CD4-positive, alpha-beta T cell (primary cell): ENCODE measurements at regions of chr16 and their contacts with region 1.

Region 1: DNA sequence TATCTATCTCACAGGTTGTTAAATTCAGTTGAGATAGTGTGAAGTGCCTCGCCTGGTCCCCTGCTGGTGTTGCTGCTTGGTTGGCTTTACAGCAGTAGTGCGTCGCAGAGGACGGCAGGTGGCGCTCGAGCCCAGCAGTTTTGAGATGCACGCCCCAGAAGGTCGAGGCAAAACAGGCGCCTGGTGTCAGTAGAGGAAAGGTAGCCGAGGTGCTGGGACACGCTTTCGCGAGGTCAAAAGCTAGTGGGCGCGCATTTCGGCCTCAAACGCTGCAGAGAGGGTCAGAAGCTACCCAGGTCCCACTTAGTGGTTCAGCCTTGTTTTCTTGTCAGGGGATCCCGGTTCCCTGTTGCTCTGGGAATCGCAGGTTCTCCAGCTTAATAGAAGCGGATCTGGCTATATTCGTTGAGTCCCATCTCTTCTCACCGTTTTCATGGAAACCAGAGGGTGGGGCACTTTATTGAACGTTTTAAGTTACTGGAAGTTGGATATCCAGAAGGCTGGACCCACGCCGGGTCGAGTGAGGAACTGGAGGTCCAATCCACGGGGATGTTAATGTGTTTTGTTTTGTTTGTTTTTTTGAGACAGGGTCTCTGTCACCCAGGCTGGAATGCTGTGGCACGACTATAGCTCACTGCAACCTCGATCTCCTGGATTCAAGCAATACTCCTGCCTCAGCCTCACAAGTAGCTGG is 10.3 kb upstream of the ZFP90 start:
- DNase-seq: peak; percentile 83 to 96 (median 89)
- ATAC-seq: peak; percentile 83
- H3K4me3 ChIP-seq: no peak overlapping the region
- H3K4me3 Mint-ChIP-seq: peak overlapping the region; percentile 88
- H3K27ac ChIP-seq: no peak overlapping the region
- H3K27ac Mint-ChIP-seq: peak overlapping the region; percentile 71
- H3K4me1 ChIP-seq: peaks cover 25% of the 10 kb centered on the region
- H3K4me1 Mint-ChIP-seq: peaks cover 28% of the 10 kb centered on the region
- H3K27me3 ChIP-seq: no peaks in the 10 kb centered on the region
- H3K27me3 Mint-ChIP-seq: no peaks in the 10 kb centered on the region
- CTCF ChIP-seq: peak; percentile 96

Region 2: DNA sequence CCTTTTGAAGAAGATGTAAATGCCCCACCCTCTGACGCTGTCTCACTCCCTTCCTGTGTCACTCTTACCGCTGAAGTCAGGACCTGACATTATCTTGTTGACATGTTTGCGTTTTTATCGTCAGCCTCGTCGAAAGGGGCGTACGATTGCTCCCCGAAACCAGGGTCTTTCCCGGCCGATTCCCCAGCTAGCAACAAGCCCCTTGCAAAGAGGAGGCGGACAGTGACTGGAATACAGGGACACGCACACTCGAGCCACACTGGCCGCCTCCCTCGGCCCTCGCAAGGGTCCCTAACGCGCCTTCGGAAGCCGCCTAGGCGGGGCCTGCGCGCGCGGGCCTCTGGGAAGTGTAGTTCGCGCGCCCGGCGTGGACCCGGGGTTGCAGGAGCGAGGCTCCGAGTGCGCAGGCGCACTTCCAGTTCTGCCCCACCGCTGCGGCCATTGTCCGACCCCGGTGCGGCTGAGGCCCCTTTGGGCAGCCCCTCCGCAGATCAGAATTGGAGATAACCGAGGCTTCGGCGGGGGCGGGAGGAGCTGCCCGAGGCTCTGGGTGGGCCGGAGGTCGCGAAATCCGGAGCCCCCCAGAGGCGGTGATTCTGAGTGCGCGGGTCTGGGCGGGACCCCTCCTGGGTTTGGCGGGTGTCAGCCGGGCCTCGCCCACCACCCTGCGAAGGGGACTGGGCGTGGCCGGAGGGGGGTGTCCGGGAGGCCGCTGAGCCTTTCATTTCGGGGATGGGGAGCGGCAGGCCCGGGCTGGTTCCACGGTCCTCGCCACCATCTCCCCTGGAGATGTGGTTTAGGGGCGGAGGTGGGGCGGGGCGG is 10.3 kb after region 1 on chr16 and contains the start of gene ZFP90:
- CTCF ChIA-PET with region 1: interaction called, 15 read pairs
- POLR2A ChIA-PET with region 1: interaction called, 28 read pairs
- intact Hi-C with region 1: loop called in 1 of 2 experiments (anchors 1 kb)
- DNase-seq: peak; percentile 69 to 93 (median 80)
- ATAC-seq: peak; percentile 86
- H3K4me3 ChIP-seq: peak within 1 kb of the TSS; percentile 79
- H3K4me3 Mint-ChIP-seq: peak within 1 kb of the TSS; percentile 97
- H3K27ac ChIP-seq: peak within 1 kb of the TSS; percentile 80 to 94
- H3K27ac Mint-ChIP-seq: peak within 1 kb of the TSS; percentile 100
- H3K4me1 ChIP-seq: peaks cover 21% of the 10 kb centered on the region
- H3K4me1 Mint-ChIP-seq: peaks cover 30% of the 10 kb centered on the region
- H3K27me3 ChIP-seq: no peaks in the 10 kb centered on the region
- H3K27me3 Mint-ChIP-seq: no peaks in the 10 kb centered on the region
- CTCF ChIP-seq: no peak
- total RNA-seq, gene ZFP90: 23.3 to 24.3 TPM

Region 3: DNA sequence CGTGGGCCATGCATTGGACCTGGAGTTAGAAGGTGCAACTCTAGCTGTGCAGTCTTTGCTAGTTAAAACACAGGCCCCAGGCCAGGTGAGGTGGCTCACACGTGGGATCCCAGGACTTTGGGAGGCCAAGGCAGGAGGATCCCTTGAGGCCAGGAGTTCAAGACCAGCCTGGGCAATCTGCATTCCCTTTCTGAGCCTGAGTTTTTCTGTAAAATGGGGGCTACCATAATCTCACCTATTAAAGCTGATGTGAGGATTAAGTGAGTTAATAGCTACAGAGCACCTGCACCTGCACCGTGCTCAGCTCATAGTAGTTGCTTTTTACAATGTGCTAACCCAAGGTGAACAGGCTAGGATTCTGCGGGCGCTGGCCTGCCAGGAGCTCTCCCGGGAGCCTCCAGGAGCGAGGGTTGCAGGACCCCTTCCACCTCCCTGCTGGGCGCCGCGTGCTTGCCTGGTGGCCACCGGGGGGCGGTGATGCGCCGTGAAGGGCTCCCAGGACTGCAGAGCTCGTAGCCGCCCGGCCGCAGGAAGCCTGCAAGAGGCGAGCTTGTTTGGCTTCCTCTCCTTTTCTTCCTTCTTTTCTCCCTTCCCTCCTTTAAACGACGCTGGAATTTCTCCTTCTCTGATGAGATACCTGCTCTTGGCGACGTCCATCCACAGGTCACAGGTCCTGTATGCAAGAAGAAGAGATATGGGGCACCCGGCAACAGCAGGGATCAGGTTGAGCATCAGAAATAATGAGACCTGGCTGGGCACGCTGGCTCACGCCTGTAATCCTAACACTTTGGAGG is 61.6 kb after region 1 on chr16:
- CTCF ChIA-PET with region 1: interaction called, 38 read pairs
- POLR2A ChIA-PET with region 1: interaction called, 3 read pairs
- intact Hi-C with region 1: loop called (anchors 2 kb)
- DNase-seq: peak; percentile 8 to 69 (median 42)
- ATAC-seq: peak; percentile 81
- H3K4me3 ChIP-seq: no peak overlapping the region
- H3K4me3 Mint-ChIP-seq: no peak overlapping the region
- H3K27ac ChIP-seq: no peak overlapping the region
- H3K27ac Mint-ChIP-seq: no peak overlapping the region
- H3K4me1 ChIP-seq: peaks cover 5% of the 10 kb centered on the region
- H3K4me1 Mint-ChIP-seq: peaks cover 4% of the 10 kb centered on the region
- H3K27me3 ChIP-seq: no peaks in the 10 kb centered on the region
- H3K27me3 Mint-ChIP-seq: no peaks in the 10 kb centered on the region
- CTCF ChIP-seq: peak; percentile 54

Region 4: GRCh38 chr16:68704232-68704867 is 175.5 kb after region 1 on chr16:
- CTCF ChIA-PET with region 1: no interaction called
- POLR2A ChIA-PET with region 1: no interaction called
- intact Hi-C with region 1: loop called (anchors 1 to 2 kb)
- DNase-seq: peak; percentile 17 to 68 (median 36)
- ATAC-seq: no peak
- H3K4me3 ChIP-seq: no peak overlapping the region
- H3K4me3 Mint-ChIP-seq: no peak overlapping the region
- H3K27ac ChIP-seq: no peak overlapping the region
- H3K27ac Mint-ChIP-seq: no peak overlapping the region
- H3K4me1 ChIP-seq: no peaks in the 10 kb centered on the region
- H3K4me1 Mint-ChIP-seq: no peaks in the 10 kb centered on the region
- H3K27me3 ChIP-seq: no peaks in the 10 kb centered on the region
- H3K27me3 Mint-ChIP-seq: peaks cover 5% of the 10 kb centered on the region
- CTCF ChIP-seq: peak; percentile 66

Region 5: GRCh38 chr16:68719993-68720489 is 191.2 kb after region 1 on chr16:
- CTCF ChIA-PET with region 1: no interaction called
- POLR2A ChIA-PET with region 1: no interaction called
- intact Hi-C with region 1: no loop called
- DNase-seq: no peak
- ATAC-seq: no peak
- H3K4me3 ChIP-seq: no peak overlapping the region
- H3K4me3 Mint-ChIP-seq: no peak overlapping the region
- H3K27ac ChIP-seq: no peak overlapping the region
- H3K27ac Mint-ChIP-seq: no peak overlapping the region
- H3K4me1 ChIP-seq: no peaks in the 10 kb centered on the region
- H3K4me1 Mint-ChIP-seq: no peaks in the 10 kb centered on the region
- H3K27me3 ChIP-seq: no peaks in the 10 kb centered on the region
- H3K27me3 Mint-ChIP-seq: no peaks in the 10 kb centered on the region
- CTCF ChIP-seq: no peak

Region 6: DNA sequence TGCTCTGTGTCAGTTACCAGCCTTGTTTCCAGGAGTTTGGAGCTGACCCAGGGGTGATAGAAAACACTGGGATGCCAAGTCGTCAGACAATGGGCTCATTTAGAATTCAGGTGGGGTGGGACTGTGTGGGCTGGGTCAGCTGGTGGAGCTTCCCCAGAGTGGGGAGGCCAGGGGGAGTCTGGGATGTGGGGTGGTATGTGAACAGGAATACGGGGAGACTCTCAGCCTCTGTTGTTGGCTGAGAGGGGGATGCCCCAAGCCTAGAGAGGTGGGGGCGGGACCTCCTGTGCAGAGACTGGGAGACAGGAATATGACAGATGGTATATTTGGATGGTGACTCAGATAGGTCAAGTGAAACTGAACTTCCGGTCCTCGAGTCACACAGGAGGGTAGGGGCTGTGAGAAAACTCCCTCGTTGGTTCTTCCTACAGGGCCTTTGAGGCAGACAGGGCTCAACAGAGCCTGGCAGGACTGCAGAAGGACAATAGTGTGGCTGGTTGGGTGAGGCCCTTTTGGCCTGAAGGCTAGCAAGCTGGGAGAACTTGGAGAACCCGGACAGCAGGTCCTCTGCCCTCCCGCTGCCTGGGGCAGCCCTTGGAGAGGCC is 231.9 kb after region 1 on chr16:
- CTCF ChIA-PET with region 1: no interaction called
- POLR2A ChIA-PET with region 1: no interaction called
- intact Hi-C with region 1: no loop called
- DNase-seq: peak in 2 of 14 experiments; percentile 35 to 45
- ATAC-seq: no peak
- H3K4me3 ChIP-seq: no peak overlapping the region
- H3K4me3 Mint-ChIP-seq: no peak overlapping the region
- H3K27ac ChIP-seq: no peak overlapping the region
- H3K27ac Mint-ChIP-seq: no peak overlapping the region
- H3K4me1 ChIP-seq: peaks cover 4% of the 10 kb centered on the region
- H3K4me1 Mint-ChIP-seq: peaks cover 10% of the 10 kb centered on the region
- H3K27me3 ChIP-seq: no peaks in the 10 kb centered on the region
- H3K27me3 Mint-ChIP-seq: no peaks in the 10 kb centered on the region
- CTCF ChIP-seq: no peak

Region 7: DNA sequence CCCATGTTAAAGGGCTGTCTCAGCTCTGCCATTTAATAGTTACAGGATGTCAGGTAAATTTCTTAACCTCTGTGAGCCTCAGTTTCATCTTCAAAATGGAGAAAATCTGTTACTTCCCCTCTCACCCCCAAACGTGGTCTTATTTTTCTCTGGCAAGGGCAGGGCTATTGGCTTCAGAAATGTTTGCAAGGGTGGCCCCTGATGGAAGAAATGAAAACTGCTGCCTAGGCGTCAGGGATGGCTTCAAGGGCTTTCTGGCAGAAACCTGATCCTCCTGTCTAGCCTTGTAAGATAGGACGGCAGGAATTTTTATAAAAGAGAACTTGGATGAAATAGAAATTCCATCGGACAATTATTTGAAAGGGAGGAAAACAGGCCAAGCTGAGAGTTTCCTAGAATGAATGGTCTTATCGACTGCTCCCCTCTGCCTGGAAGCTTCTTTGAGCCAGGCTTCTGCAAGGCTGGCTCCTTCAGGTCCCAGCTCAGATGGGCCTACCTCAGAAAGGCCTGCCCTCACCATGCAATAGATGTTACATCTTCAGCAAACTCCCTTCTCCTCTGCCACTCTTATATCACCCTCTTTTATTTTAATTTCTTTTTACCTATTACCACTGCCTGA is 271.5 kb after region 1 on chr16:
- CTCF ChIA-PET with region 1: no interaction called
- POLR2A ChIA-PET with region 1: no interaction called
- intact Hi-C with region 1: loop called in 1 of 2 experiments (anchors 1 kb)
- DNase-seq: peak in 11 of 14 experiments; percentile 4 to 63 (median 11)
- ATAC-seq: peak; percentile 73
- H3K4me3 ChIP-seq: no peak overlapping the region
- H3K4me3 Mint-ChIP-seq: no peak overlapping the region
- H3K27ac ChIP-seq: no peak overlapping the region
- H3K27ac Mint-ChIP-seq: no peak overlapping the region
- H3K4me1 ChIP-seq: no peaks in the 10 kb centered on the region
- H3K4me1 Mint-ChIP-seq: no peaks in the 10 kb centered on the region
- H3K27me3 ChIP-seq: no peaks in the 10 kb centered on the region
- H3K27me3 Mint-ChIP-seq: no peaks in the 10 kb centered on the region
- CTCF ChIP-seq: peak; percentile 47

Region 8: DNA sequence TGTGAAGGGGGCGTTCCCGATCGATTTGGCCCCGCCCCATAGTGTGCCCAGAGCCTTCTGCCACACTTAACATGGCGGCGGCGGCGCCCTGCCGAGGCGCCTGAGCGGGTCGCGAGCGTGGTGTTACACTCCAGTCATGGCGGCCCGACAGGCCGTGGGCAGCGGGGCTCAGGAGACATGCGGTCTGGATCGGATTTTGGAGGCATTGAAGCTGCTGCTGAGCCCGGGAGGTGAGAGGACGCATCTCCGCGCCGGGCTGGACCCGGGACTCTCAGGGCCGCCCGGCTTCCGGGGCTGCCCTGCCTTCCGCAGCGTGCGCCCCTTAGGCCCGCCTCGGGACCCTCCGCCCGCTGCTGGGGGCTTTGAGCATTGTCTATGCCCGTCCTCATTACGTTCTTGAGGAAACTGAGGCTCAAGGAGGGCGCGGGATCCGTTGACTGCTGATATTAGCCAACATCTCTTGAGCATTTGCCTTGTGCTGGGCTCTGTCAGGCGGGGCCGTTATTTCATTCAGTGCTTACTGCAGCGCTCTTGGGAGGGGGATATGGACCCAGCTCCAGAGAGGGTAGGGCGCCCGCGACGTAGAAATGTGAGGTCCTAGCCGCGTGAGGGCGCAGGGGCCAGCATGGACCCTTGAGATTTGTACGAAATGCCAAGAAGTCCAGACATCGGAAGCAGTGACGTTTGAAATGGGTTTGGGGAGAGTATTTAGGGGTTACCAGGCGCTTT is 314.8 kb after region 1 on chr16 and contains the start of gene TANGO6:
- CTCF ChIA-PET with region 1: interaction called, 4 read pairs
- POLR2A ChIA-PET with region 1: no interaction called
- intact Hi-C with region 1: loop called (anchors 1 to 2 kb)
- DNase-seq: peak; percentile 81 to 95 (median 89)
- ATAC-seq: peak; percentile 96
- H3K4me3 ChIP-seq: peak within 1 kb of the TSS; percentile 82
- H3K4me3 Mint-ChIP-seq: peak within 1 kb of the TSS; percentile 94
- H3K27ac ChIP-seq: peak within 1 kb of the TSS; percentile 55 to 68
- H3K27ac Mint-ChIP-seq: peak within 1 kb of the TSS; percentile 60
- H3K4me1 ChIP-seq: peaks cover 28% of the 10 kb centered on the region
- H3K4me1 Mint-ChIP-seq: peaks cover 28% of the 10 kb centered on the region
- H3K27me3 ChIP-seq: no peaks in the 10 kb centered on the region
- H3K27me3 Mint-ChIP-seq: no peaks in the 10 kb centered on the region
- CTCF ChIP-seq: peak; percentile 18
- total RNA-seq, gene TANGO6: 17.1 to 18.1 TPM

Region 9: DNA sequence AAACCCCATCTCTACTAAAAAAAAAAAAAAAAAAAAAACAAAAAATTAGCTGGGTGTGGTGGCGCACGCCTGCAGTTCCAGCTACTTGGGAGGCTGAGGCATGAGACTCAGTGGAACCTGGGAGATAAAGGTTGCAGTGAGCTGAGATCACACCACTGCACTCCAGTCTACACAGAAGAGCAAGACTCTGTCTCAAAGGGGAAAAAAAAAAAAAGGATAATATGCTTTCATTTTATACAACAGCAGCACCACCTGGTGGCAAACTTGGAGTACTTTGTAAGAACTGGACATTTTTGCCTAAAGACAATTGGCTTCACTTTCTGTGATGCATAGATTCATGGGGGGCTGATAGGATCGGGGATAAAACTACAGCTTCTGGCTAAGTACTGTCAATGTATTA is 595.1 kb after region 1 on chr16:
- CTCF ChIA-PET with region 1: interaction called, 3 read pairs
- POLR2A ChIA-PET with region 1: no interaction called
- intact Hi-C with region 1: loop called (anchors 1 kb)
- DNase-seq: peak; percentile 29 to 84 (median 54)
- ATAC-seq: peak; percentile 95
- H3K4me3 ChIP-seq: no peak overlapping the region
- H3K4me3 Mint-ChIP-seq: no peak overlapping the region
- H3K27ac ChIP-seq: no peak overlapping the region
- H3K27ac Mint-ChIP-seq: no peak overlapping the region
- H3K4me1 ChIP-seq: peaks cover 4% of the 10 kb centered on the region
- H3K4me1 Mint-ChIP-seq: peaks cover 26% of the 10 kb centered on the region
- H3K27me3 ChIP-seq: no peaks in the 10 kb centered on the region
- H3K27me3 Mint-ChIP-seq: no peaks in the 10 kb centered on the region
- CTCF ChIP-seq: peak; percentile 77